ENCODE measurements at regions of chr9 and their contacts with region 1.

Region 1: GRCh38 chr9:94213511-94214124 is 45.5 kb upstream of the ZNF169 start:
- DNase-seq: peak; percentile 70 to 76 (median 72)
- ATAC-seq: peak; percentile 85 to 98 (median 95)
- H3K4me3 ChIP-seq: no peak overlapping the region
- H3K27ac ChIP-seq: no peak overlapping the region
- H3K4me1 ChIP-seq: peaks cover 0 to 6% (median 0%) of the 10 kb centered on the region in 12 donors
- H3K27me3 ChIP-seq: no peaks in the 10 kb centered on the region
- CTCF ChIP-seq: peak; percentile 76 to 96 (median 84)
- POLR2A ChIP-seq: no peak

Region 2: DNA sequence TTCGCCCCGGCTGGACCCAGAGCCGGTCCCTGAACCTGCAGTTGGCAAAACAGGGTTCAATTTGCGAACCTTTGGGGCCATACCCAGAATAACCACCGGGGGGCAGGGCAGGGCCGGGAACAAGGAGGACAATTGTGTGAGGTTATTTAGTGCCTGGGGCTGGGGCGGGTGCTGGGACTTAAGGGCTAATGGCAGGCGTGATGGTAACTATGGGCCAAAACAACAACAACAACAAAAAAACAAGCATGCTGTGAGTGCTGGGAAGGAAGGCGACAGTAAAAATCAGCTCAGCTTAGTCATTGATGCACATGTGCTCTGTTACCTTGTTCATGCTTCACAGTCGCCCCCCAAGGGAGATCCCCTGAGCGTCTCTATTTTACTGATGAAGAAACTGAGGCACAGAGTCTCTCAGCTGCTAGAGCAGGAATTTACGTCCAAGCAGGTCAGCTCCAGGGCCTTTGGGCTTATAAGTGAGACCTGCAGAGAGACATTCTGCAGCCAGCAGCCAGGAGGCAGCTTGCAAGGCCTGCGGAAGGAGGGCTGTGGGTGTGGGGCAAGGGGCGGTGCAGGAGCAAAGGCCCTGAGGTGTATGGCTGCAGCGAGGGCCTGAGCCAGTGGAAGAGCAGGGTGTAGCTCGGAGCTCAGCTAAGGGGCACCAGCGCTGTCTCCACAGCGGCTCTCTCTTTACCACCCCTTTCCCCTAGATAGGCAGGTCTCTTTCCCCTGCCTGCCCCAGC is 531.2 kb before region 1 on chr9:
- intact Hi-C with region 1: loop called in 8 of 10 experiments (anchors 5 to 10 kb)
- DNase-seq: peak; percentile 37 to 82 (median 52)
- ATAC-seq: peak in 3 of 4 donors; percentile 45 to 68 (median 57)
- H3K4me3 ChIP-seq: no peak overlapping the region
- H3K27ac ChIP-seq: no peak overlapping the region
- H3K4me1 ChIP-seq: peaks cover 0 to 5% (median 0%) of the 10 kb centered on the region in 12 donors
- H3K27me3 ChIP-seq: no peaks in the 10 kb centered on the region
- CTCF ChIP-seq: peak; percentile 60 to 82 (median 76)
- POLR2A ChIP-seq: no peak

Region 3: DNA sequence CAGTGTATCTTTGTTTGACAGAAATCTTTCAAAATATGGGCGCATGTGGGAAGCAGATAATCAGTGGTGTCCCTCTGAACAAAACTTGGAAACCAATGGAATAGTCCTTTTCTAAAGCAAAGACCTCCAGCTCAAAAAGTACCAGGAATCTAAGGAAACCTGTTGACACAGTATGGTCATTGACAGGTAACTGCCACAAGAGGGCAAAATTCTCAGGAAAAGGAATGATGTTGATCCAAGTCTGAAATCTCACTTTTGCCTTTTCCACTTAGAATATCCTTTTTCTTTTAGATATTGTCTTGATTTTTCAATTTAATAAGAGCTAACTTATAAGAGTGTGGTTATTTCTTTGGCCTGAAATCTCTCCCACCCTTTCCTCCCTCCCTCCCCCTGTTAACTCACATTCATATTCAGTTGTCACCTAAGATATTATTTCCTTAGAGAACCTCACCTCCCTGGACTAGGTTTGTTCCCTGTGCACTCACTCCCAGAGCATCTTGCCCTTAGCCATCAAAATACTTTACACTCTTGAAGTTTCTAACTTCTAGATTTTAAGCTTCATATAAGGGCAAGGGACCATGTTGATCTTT is 199.5 kb before region 1 on chr9:
- intact Hi-C with region 1: loop called (anchors 1 to 5 kb)
- DNase-seq: no peak
- ATAC-seq: no peak
- H3K4me3 ChIP-seq: no peak overlapping the region
- H3K27ac ChIP-seq: no peak overlapping the region
- H3K4me1 ChIP-seq: peaks cover 0 to 11% (median 0%) of the 10 kb centered on the region in 12 donors
- H3K27me3 ChIP-seq: no peaks in the 10 kb centered on the region
- CTCF ChIP-seq: peak; percentile 35 to 67 (median 56)
- POLR2A ChIP-seq: no peak

Region 4: GRCh38 chr9:94065535-94065961 is 148.1 kb before region 1 on chr9:
- intact Hi-C with region 1: loop called (anchors 1 to 2 kb)
- DNase-seq: peak in 4 of 5 donors; percentile 70 to 79 (median 72)
- ATAC-seq: peak; percentile 64 to 84 (median 76)
- H3K4me3 ChIP-seq: no peak overlapping the region
- H3K27ac ChIP-seq: peak overlapping the region in 3 of 12 donors; percentile 8 to 44 (median 31)
- H3K4me1 ChIP-seq: peaks cover 0 to 8% (median 2%) of the 10 kb centered on the region in 12 donors
- H3K27me3 ChIP-seq: no peaks in the 10 kb centered on the region
- CTCF ChIP-seq: peak; percentile 80 to 95 (median 88)
- POLR2A ChIP-seq: no peak

Region 5: DNA sequence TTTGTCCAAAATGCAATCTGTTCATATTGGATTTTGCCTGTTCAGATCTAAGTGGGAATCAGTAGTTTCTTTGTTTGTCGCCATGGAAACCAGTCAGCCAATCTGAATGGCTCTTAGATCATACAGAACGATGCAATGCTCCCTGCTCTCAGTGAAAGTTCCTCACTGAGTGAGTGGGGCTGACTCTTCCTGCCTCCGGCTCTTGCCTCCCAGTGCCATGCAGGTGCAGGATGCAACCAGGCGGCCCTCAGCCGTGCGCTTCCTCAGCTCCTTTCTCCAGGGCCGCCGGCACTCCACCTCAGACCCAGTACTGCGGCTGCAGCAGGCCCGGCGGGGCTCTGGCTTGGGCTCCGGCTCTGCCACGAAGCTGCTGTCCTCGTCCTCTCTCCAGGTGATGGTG is 129.3 kb before region 1 on chr9 and contains the start of gene PTPDC1:
- intact Hi-C with region 1: loop called in 1 of 10 experiments (anchors 5 kb)
- DNase-seq: peak in 1 of 5 donors; percentile 21
- ATAC-seq: peak in 3 of 4 donors; percentile 42 to 54 (median 52)
- H3K4me3 ChIP-seq: peak within 1 kb of the TSS in 5 of 12 donors; percentile 16 to 43 (median 26)
- H3K27ac ChIP-seq: peak within 1 kb of the TSS in 9 of 12 donors; percentile 15 to 76 (median 53)
- H3K4me1 ChIP-seq: peaks cover 0 to 45% (median 31%) of the 10 kb centered on the region in 12 donors
- H3K27me3 ChIP-seq: no peaks in the 10 kb centered on the region
- CTCF ChIP-seq: no peak
- POLR2A ChIP-seq: no peak
- total RNA-seq, gene PTPDC1: 6.4 to 12.3 (median 9.5) TPM

Region 6: GRCh38 chr9:94166237-94166963 is 47.2 kb before region 1 on chr9:
- intact Hi-C with region 1: loop called in 4 of 10 experiments (anchors 5 kb)
- DNase-seq: peak; percentile 98 to 99 (median 99)
- ATAC-seq: peak; percentile 83 to 88 (median 84)
- H3K4me3 ChIP-seq: peak overlapping the region; percentile 50 to 91 (median 86)
- H3K27ac ChIP-seq: peak overlapping the region; percentile 97 to 100 (median 100)
- H3K4me1 ChIP-seq: peaks cover 3 to 47% (median 38%) of the 10 kb centered on the region in 12 donors
- H3K27me3 ChIP-seq: no peaks in the 10 kb centered on the region
- CTCF ChIP-seq: peak in 5 of 12 donors; percentile 22 to 51 (median 29)
- POLR2A ChIP-seq: peak; percentile 83 to 97

Region 7: GRCh38 chr9:94173632-94174031 is 40.0 kb before region 1 on chr9:
- intact Hi-C with region 1: loop called in 4 of 10 experiments (anchors 5 kb)
- DNase-seq: no peak
- ATAC-seq: peak in 2 of 4 donors; percentile 15 to 19
- H3K4me3 ChIP-seq: no peak overlapping the region
- H3K27ac ChIP-seq: peak overlapping the region in 3 of 12 donors; percentile 9 to 99 (median 9)
- H3K4me1 ChIP-seq: peaks cover 29 to 100% (median 97%) of the 10 kb centered on the region in 12 donors
- H3K27me3 ChIP-seq: no peaks in the 10 kb centered on the region
- CTCF ChIP-seq: no peak
- POLR2A ChIP-seq: no peak